PC-3 (cell line): ENCODE measurements at regions of chr5 and their contacts with region 1.

Region 1: DNA sequence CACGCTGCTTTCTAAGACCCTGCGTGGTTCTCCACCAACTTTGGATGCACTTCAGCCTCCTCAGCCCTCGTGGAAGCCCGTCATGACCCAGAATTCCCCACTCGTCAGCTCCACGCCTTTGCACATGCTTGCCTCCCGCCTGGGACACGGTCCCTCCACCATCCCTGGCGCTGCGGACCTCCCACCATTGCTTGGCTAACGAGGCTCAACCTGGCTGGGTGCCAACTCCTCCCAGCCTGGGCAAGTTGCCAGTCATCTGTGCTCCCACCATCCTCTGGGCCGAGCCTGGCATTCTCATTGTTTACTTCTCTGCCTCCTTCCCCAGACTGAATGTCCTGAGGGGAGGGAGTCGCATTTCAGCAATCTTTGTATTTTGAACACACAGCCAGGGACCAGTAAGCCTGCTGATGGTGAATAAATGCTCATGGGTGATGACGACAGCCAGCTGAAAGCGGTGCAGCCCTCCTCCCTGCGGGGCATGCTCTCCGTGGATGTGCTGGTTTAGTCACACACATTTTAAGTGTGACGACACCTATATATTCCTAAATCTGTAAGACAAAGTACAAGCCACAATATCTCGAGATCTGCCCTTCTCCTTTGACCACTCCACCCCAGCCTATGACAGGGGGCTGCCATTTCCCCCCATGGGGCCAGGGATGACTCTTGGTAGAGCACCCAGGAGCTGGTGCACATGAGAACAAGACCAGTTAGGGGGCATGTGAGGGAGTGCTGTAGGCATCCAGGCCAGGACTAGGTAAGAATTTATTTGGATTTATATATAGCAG is 37.6 kb downstream of the ANKRD33B start:
- DNase-seq: peak; percentile 99
- ATAC-seq: peak; percentile 93
- H3K4me3 ChIP-seq: peak overlapping the region; percentile 55
- H3K27ac ChIP-seq: peak overlapping the region; percentile 80
- H3K4me1 ChIP-seq: peaks cover 38% of the 10 kb centered on the region
- H3K27me3 ChIP-seq: no peaks in the 10 kb centered on the region
- CTCF ChIP-seq: no peak

Region 2: GRCh38 chr5:10467240-10468198 is 133.9 kb before region 1 on chr5:
- CTCF ChIA-PET with region 1: no interaction called
- POLR2A ChIA-PET with region 1: no interaction called
- intact Hi-C with region 1: loop called (anchors 5 kb)
- DNase-seq: peak; percentile 85
- ATAC-seq: peak; percentile 78
- H3K4me3 ChIP-seq: peak overlapping the region; percentile 34; the same call in 1 of the 2 replicates
- H3K27ac ChIP-seq: peak overlapping the region; percentile 68
- H3K4me1 ChIP-seq: peaks cover 25% of the 10 kb centered on the region
- H3K27me3 ChIP-seq: no peaks in the 10 kb centered on the region
- CTCF ChIP-seq: no peak

Region 3: DNA sequence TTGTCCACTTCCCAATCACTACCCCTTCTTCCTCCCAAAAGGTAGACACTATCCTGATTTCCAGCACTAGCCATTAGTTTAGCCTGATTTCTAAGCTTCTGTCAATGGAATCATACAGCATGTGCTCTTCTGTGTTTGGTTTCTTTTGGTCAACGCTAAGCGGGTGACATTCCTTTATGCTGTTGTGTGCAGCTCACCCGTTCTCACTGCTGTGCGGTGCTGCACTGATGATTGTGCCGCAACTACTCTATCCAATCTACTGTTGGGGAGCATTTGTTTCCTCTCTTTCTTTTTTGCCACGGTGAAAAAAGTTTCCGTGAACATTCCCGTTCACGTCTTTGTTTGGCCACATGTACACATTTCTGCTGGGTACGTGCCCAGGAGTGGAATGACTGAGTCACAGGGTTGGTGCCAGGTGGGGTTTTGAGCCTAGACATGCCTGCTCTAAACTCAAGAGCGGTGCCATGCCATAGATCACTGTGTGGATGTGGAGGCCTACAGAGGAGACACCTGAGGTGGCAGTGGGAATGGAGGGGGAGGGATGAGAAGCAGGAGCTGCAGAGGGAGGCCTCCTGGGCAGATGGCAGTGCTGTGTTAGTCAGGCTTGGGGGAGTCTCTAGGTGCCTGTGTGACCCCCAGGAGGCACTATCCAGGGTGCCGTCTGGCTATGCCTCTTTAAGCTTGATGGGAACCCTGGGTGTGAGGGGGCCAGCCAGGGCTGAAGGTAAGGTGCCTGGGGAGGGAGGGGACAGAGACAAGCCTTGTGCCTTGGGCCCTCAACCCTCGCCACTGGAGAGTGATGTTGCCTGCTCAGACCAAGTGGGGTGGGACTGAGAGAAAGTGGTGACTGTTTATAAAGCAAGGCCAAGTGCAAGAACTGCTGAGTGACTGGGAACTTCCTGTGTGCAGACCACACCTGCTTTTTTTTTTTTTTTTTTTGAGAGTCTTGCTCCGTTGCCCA is 49.0 kb before region 1 on chr5:
- CTCF ChIA-PET with region 1: no interaction called
- POLR2A ChIA-PET with region 1: no interaction called
- intact Hi-C with region 1: loop called (anchors 2 kb)
- DNase-seq: peak; percentile 61
- ATAC-seq: no peak
- H3K4me3 ChIP-seq: no peak overlapping the region
- H3K27ac ChIP-seq: peak overlapping the region; percentile 92
- H3K4me1 ChIP-seq: peaks cover 71% of the 10 kb centered on the region
- H3K27me3 ChIP-seq: no peaks in the 10 kb centered on the region
- CTCF ChIP-seq: no peak

Region 4: DNA sequence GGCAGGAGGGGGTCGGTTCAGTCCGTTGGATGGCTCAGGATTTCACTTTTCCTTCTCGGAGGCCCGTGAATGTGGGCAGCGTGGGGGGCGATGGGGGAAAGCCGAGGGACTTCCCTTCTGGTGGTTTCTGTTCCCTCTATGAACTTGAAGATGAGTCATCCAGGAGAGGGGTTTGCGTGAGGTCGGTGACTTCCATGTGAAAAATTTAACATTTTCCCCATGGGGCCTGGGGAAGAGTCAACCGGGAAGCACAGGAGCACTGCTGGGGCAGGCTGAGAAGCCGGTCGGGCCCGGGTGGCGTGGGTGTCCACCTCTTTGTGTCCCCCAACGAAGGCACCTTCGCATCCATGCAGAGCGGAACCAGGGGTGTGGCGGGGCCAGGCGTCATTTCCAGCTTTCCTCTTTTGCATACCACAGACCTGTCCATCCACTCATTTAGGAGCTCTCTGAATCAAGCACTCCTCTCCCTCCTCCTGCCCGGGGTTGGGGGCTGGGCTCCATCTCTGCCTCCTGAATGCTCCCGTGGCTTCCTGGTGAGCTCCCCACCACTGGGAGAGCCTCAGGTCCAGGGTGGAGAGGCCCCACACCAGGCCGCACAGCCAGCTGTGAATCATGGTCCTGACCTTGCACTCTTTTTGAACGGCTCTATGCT is 30.8 kb after region 1 on chr5:
- CTCF ChIA-PET with region 1: no interaction called
- POLR2A ChIA-PET with region 1: interaction called, 22 read pairs
- intact Hi-C with region 1: no loop called
- DNase-seq: no peak
- ATAC-seq: no peak
- H3K4me3 ChIP-seq: no peak overlapping the region
- H3K27ac ChIP-seq: no peak overlapping the region
- H3K4me1 ChIP-seq: peaks cover 18% of the 10 kb centered on the region
- H3K27me3 ChIP-seq: no peaks in the 10 kb centered on the region
- CTCF ChIP-seq: no peak